CD4-positive, alpha-beta memory T cell (primary cell): ENCODE measurements at regions of chr19 and their contacts with region 1.

Region 1: DNA sequence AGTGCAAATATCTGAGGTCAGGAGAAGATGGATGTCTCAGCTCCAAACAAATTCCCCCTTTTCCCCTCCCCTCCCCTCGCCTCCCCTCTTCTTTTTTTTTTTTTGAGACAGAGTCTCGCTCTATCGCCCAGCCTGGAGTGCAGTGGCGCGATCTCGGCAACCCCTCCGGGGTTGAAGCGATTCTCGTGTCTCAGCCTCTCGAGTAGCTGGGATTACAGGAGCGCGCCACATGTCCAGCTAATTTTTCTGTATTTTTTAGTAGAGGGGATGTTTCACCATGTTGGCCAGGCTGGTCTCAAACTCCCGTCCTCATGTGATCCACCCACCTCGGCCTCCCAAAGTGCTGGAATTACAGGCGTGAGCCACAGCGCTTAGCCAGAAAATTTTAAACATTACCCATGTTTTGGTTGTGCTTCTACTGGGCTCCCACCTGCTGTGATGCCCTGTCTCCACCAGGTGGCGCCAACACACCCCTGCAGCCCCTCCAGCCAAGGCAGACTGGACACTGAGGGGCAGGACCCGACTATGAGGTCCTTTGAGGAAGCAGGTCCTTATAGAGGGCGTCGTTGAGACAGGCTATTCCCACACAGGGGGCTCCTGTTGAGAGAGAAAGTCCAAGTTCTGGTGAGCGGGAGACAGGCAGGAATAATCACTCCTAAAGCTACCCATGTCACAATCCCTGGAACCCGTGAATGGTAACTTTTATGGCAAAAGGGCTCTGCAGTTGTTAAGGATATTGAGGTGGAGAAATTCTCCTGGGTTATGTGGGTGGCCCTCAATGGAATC is 6.3 kb downstream of the ERICH4 start:
- DNase-seq: peak; percentile 60 to 72 (median 63)
- H3K4me3 ChIP-seq: peak overlapping the region in 1 of 2 donors; percentile 21
- H3K4me3 Mint-ChIP-seq: peak overlapping the region; percentile 48 to 84 (median 78)
- H3K27ac ChIP-seq: no peak overlapping the region
- H3K27ac Mint-ChIP-seq: peak overlapping the region in 1 of 7 donors; percentile 36
- H3K4me1 ChIP-seq: peaks cover 8% of the 10 kb centered on the region
- H3K4me1 Mint-ChIP-seq: peaks cover 0 to 21% (median 4%) of the 10 kb centered on the region in 4 donors
- H3K27me3 ChIP-seq: no peaks in the 10 kb centered on the region
- H3K27me3 Mint-ChIP-seq: peaks cover 4 to 15% of the 10 kb centered on the region in 2 donors

Region 2: GRCh38 chr19:41334793-41335192 is 114.5 kb before region 1 on chr19:
- CTCF ChIA-PET with region 1: no interaction called
- POLR2A ChIA-PET with region 1: no interaction called
- intact Hi-C with region 1: no loop called
- DNase-seq: no peak
- H3K4me3 ChIP-seq: no peak overlapping the region
- H3K4me3 Mint-ChIP-seq: peak overlapping the region in 1 of 8 donors; percentile 30
- H3K27ac ChIP-seq: no peak overlapping the region
- H3K27ac Mint-ChIP-seq: peak overlapping the region in 6 of 7 donors; percentile 29 to 91 (median 60)
- H3K4me1 ChIP-seq: peaks cover 53% of the 10 kb centered on the region
- H3K4me1 Mint-ChIP-seq: peaks cover 24 to 63% (median 36%) of the 10 kb centered on the region in 4 donors
- H3K27me3 ChIP-seq: no peaks in the 10 kb centered on the region
- H3K27me3 Mint-ChIP-seq: no peaks in the 10 kb centered on the region

Region 3: DNA sequence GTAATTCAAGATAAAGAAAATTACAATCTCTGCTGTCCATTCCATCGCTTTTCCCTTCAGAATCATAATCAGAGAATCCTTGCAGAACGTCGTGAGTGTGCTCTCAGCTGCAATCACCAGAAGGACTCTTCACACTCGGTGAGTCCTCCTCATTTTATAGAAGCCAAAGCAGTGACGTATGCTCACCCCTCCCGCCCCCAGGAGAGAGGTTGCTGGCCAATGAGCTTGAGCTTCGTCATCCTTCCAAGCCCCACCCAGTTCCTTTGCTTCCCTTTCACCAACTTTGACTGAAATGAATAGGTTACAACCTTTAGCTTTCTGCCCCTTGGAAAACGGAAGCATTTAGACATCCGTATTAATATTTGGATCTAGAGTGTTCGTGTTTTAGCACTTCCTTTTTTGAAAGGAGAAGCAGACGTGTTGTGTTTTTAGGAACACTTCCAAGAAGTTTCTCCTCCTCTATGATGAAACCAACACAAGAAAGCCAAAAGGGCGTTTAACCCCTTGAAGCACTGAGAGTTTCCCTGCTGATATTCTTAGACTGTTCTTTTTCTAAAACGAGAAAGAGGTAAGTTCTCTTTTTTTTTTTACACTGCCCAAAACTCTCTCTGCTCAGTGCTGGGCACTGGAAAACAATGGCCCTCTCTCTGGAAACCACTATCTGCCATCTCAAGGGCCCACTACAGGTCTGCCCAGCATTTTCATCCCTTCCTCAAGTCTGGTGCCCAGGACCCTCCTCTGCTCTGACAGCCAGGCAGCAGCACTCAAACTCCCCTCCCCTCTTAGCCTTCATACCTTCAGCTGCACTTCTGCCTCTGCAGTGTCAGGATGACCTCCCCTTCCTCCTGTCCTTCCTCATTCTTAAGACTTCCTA is 82.4 kb after region 1 on chr19:
- CTCF ChIA-PET with region 1: interaction called, 51 read pairs
- POLR2A ChIA-PET with region 1: interaction called, 3 read pairs
- intact Hi-C with region 1: no loop called
- DNase-seq: peak; percentile 80 to 93 (median 88)
- H3K4me3 ChIP-seq: peak overlapping the region; percentile 30 to 37
- H3K4me3 Mint-ChIP-seq: peak overlapping the region; percentile 77 to 88 (median 86)
- H3K27ac ChIP-seq: peak overlapping the region; percentile 53
- H3K27ac Mint-ChIP-seq: peak overlapping the region; percentile 82 to 98 (median 94)
- H3K4me1 ChIP-seq: peaks cover 53% of the 10 kb centered on the region
- H3K4me1 Mint-ChIP-seq: peaks cover 33 to 60% (median 49%) of the 10 kb centered on the region in 4 donors
- H3K27me3 ChIP-seq: no peaks in the 10 kb centered on the region
- H3K27me3 Mint-ChIP-seq: peaks cover 1 to 3% of the 10 kb centered on the region in 2 donors

Region 4: DNA sequence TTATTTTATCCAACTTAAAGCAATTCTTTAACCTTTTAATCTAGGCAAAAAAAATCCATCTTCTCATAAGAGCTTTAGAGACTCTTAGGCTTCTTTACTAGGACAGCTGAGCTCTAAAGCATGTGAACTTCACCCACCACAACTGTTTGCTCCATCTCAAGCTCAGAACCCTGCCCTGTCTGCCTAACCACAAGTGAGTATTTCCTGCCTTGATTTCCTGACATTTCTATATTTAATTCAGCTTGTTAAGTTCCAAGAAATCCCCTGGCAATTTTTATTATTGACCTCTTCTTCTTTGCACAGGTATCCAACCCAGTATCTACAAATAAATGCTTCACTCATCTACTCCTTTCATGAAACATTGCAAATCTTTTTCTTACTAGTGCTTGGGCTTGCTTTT is 105.6 kb after region 1 on chr19:
- CTCF ChIA-PET with region 1: interaction called, 43 read pairs
- POLR2A ChIA-PET with region 1: no interaction called
- intact Hi-C with region 1: no loop called
- DNase-seq: peak; percentile 64 to 78 (median 66)
- H3K4me3 ChIP-seq: peak overlapping the region in 1 of 2 donors; percentile 37
- H3K4me3 Mint-ChIP-seq: peak overlapping the region; percentile 56 to 100 (median 98)
- H3K27ac ChIP-seq: peak overlapping the region; percentile 63
- H3K27ac Mint-ChIP-seq: peak overlapping the region; percentile 66 to 95 (median 88)
- H3K4me1 ChIP-seq: peaks cover 72% of the 10 kb centered on the region
- H3K4me1 Mint-ChIP-seq: peaks cover 45 to 84% (median 62%) of the 10 kb centered on the region in 4 donors
- H3K27me3 ChIP-seq: no peaks in the 10 kb centered on the region
- H3K27me3 Mint-ChIP-seq: no peaks in the 10 kb centered on the region

Region 5: GRCh38 chr19:41570639-41571112 is 121.4 kb after region 1 on chr19:
- CTCF ChIA-PET with region 1: interaction called, 158 read pairs
- POLR2A ChIA-PET with region 1: interaction called, 5 read pairs
- intact Hi-C with region 1: loop called (anchors 1 kb)
- DNase-seq: peak; percentile 80 to 83 (median 82)
- H3K4me3 ChIP-seq: no peak overlapping the region
- H3K4me3 Mint-ChIP-seq: peak overlapping the region in 5 of 8 donors; percentile 35 to 74 (median 47)
- H3K27ac ChIP-seq: no peak overlapping the region
- H3K27ac Mint-ChIP-seq: peak overlapping the region; percentile 5 to 87 (median 65)
- H3K4me1 ChIP-seq: peaks cover 43% of the 10 kb centered on the region
- H3K4me1 Mint-ChIP-seq: peaks cover 22 to 59% (median 44%) of the 10 kb centered on the region in 4 donors
- H3K27me3 ChIP-seq: no peaks in the 10 kb centered on the region
- H3K27me3 Mint-ChIP-seq: no peaks in the 10 kb centered on the region

Region 6: DNA sequence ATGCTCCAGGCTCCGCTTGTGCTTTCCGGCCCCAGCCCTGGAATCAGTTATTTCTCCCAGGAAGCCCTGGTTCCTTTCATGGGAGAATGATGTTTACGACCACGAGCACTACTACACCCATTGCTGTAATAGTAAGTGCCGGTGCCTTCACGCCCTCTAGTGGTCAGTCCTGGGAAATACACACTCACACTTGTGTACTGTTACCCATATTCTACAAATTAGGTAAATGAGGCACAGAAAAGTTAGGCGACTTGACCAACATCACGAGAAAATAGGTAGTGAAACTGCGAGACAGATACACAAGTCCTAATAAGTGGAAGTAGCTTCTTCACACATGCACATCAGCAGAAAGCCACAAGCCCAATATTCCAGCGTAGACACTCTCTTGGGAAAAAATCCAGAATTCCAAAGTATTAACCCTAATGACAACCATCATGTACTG is 148.3 kb after region 1 on chr19:
- CTCF ChIA-PET with region 1: interaction called, 96 read pairs
- POLR2A ChIA-PET with region 1: interaction called, 6 read pairs
- intact Hi-C with region 1: loop called (anchors 1 kb)
- DNase-seq: peak; percentile 69 to 77 (median 74)
- H3K4me3 ChIP-seq: no peak overlapping the region
- H3K4me3 Mint-ChIP-seq: peak overlapping the region in 2 of 8 donors; percentile 49 to 76
- H3K27ac ChIP-seq: no peak overlapping the region
- H3K27ac Mint-ChIP-seq: peak overlapping the region in 2 of 7 donors; percentile 59 to 63
- H3K4me1 ChIP-seq: peaks cover 9% of the 10 kb centered on the region
- H3K4me1 Mint-ChIP-seq: peaks cover 7 to 11% (median 11%) of the 10 kb centered on the region in 4 donors
- H3K27me3 ChIP-seq: peaks cover 8% of the 10 kb centered on the region
- H3K27me3 Mint-ChIP-seq: peaks cover 10 to 11% of the 10 kb centered on the region in 2 donors

Region 7: DNA sequence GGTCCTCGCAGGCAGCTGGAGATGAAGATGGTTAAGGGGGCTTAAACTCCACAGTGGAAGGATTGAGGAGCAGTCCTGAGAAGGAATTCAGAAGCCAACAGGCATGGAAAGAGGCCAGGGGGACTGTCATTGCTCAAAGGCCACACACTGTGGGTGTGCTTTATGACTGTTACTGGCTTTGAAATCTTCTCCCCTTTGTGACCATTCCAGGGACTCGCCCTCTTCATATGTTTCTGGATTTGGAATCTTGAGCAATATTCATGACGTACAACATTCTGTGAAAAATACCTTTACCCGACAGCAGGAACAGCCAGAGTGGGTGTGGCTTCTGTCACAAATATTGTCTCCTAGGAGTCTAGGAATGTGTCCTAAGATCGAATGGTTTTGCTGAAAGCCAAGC is 222.2 kb after region 1 on chr19:
- CTCF ChIA-PET with region 1: no interaction called
- POLR2A ChIA-PET with region 1: no interaction called
- intact Hi-C with region 1: no loop called
- DNase-seq: no peak
- H3K4me3 ChIP-seq: no peak overlapping the region
- H3K4me3 Mint-ChIP-seq: no peak overlapping the region
- H3K27ac ChIP-seq: no peak overlapping the region
- H3K27ac Mint-ChIP-seq: no peak overlapping the region
- H3K4me1 ChIP-seq: no peaks in the 10 kb centered on the region
- H3K4me1 Mint-ChIP-seq: no peaks in the 10 kb centered on the region
- H3K27me3 ChIP-seq: peaks cover 15% of the 10 kb centered on the region
- H3K27me3 Mint-ChIP-seq: peaks cover 41 to 47% of the 10 kb centered on the region in 2 donors